AG04450 (cell line): ENCODE measurements at regions of chr5 and their contacts with region 1.

Region 1: GRCh38 chr5:78927657-78928282 is 57.3 kb downstream of the ARSB start:
- DNase-seq: no peak
- H3K4me3 ChIP-seq: no peak overlapping the region
- H3K27ac ChIP-seq: peak overlapping the region; percentile 39
- H3K27me3 ChIP-seq: no peaks in the 10 kb centered on the region
- CTCF ChIP-seq: no peak

Region 2: GRCh38 chr5:78367318-78367991 is 560.3 kb before region 1 on chr5:
- CTCF ChIA-PET with region 1: no interaction called
- POLR2A ChIA-PET with region 1: interaction called, 13 read pairs
- DNase-seq: no peak
- H3K4me3 ChIP-seq: no peak overlapping the region
- H3K27ac ChIP-seq: no peak overlapping the region
- H3K27me3 ChIP-seq: no peaks in the 10 kb centered on the region
- CTCF ChIP-seq: no peak

Region 3: GRCh38 chr5:78483809-78484521 is 443.8 kb before region 1 on chr5:
- CTCF ChIA-PET with region 1: no interaction called
- POLR2A ChIA-PET with region 1: no interaction called
- DNase-seq: no peak
- H3K4me3 ChIP-seq: no peak overlapping the region
- H3K27ac ChIP-seq: no peak overlapping the region
- H3K27me3 ChIP-seq: no peaks in the 10 kb centered on the region
- CTCF ChIP-seq: 0 out of 2 replicates have a peak, but pooled peaks have one; percentile 7